A673 (cell line): ENCODE measurements at regions of chr12 and their contacts with region 1.

Region 1: DNA sequence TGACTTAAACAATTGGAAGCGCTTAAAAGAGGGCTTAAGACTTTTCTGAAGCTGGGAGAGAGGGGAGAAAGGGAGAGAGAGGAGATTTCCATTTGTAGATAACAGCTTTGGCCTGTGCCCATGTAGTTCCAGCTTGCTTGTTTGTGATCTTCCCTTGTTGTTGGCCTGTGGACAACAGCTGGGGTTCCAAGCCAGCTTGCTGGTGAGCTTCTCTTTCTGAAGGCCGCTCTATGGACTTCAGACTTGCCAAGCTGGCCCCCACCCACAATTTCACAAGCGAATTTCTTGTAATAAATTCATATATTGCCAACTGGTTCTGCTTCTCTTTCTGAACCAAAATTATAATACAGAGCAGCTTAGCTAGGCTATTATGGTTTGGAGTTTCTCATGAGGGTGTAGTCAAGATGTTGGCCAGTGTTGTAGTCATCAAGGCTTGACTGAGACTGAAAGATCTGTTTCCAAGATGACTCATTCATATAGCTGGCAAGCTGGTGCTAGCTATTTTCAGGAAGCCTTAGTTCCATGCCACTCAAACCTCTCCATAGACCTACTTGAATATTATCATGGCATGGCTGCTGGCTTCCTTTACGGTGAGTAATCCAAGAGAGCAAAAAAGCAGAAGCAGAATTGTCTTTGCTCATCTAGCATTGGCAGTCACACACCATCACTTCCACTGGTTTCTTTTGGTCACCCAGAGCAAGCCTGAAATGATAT is 89.4 kb downstream of the ATP23 start:
- DNase-seq: no peak
- H3K4me3 ChIP-seq: no peak overlapping the region
- H3K27ac ChIP-seq: no peak overlapping the region
- H3K4me1 ChIP-seq: no peaks in the 10 kb centered on the region
- H3K27me3 ChIP-seq: no peaks in the 10 kb centered on the region
- CTCF ChIP-seq: no peak

Region 2: DNA sequence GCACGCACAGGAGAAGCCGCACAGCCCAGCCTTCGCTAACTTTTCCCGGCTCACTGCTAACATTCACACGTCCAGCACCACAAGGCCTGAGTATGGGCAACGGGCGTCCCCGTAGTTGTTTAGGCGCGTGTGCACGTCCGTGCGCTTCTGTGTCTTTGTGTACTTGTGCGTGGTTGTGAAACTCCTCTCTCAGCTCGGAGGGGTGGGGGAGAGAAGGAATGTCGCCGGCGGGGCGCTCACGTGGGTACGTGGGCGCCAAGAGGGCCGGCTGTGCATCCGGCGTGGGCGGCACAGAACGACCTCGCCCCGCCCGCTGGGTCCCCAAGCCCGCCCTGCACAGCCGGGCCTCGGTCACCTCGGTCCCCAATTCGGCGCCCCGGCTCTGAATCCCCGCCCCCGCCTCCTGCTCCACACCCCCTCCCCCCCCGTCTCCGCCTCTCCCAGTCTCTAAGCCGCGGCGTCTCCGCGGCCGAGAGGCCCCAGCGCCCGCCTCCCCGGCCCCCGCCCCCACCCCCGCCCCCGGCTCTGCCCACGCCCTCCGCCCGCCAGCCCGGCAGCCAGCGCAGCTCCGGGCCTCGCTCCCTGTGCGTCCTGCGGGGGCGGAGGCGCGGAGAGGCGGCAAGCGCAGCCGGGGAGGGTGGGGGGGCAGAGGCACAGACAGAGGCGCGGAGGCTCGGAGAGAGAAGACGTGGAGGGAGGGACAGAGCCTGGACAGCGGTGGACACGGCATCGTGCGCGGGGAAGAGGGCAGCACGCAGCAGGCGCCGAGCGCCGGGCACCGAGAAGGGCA is 942.1 kb before region 1 on chr12 and contains the start of gene NAB2:
- CTCF ChIA-PET with region 1: no interaction called
- POLR2A ChIA-PET with region 1: interaction called, 10 read pairs
- intact Hi-C with region 1: no loop called
- DNase-seq: peak; percentile 98
- H3K4me3 ChIP-seq: peak within 1 kb of the TSS; percentile 93
- H3K27ac ChIP-seq: peak within 1 kb of the TSS; percentile 100
- H3K4me1 ChIP-seq: peaks cover 51% of the 10 kb centered on the region
- H3K27me3 ChIP-seq: no peaks in the 10 kb centered on the region
- CTCF ChIP-seq: no peak
- total RNA-seq, gene NAB2: 58.0 and 61.8 TPM in 2 replicates